Activated CD4-positive, alpha-beta T cell treated with anti-CD3 and anti-CD28 coated beads, Interleukin-2, amount 10 ng/mL, durations not matched to agents 24 days and 14 days (primary cell): ENCODE measurements at regions of chr2 and their contacts with region 1.

Region 1: GRCh38 chr2:105929516-105929915 is 184.8 kb downstream of the NCK2 start:
- DNase-seq: peak; percentile 79
- H3K4me3 Mint-ChIP-seq: peak overlapping the region; percentile 44
- H3K27ac Mint-ChIP-seq: peak overlapping the region; percentile 66
- H3K4me1 Mint-ChIP-seq: peaks cover 42% of the 10 kb centered on the region
- H3K27me3 Mint-ChIP-seq: no peaks in the 10 kb centered on the region

Region 2: GRCh38 chr2:105373895-105374401 is 555.6 kb before region 1 on chr2:
- intact Hi-C with region 1: no loop called
- DNase-seq: peak; percentile 80
- H3K4me3 Mint-ChIP-seq: peak overlapping the region; percentile 77
- H3K27ac Mint-ChIP-seq: peak overlapping the region; percentile 95
- H3K4me1 Mint-ChIP-seq: peaks cover 17% of the 10 kb centered on the region
- H3K27me3 Mint-ChIP-seq: no peaks in the 10 kb centered on the region

Region 3: GRCh38 chr2:105873721-105874120 is 55.8 kb before region 1 on chr2:
- intact Hi-C with region 1: loop called (anchors 2 kb)
- DNase-seq: peak; percentile 78
- H3K4me3 Mint-ChIP-seq: peak overlapping the region; percentile 59
- H3K27ac Mint-ChIP-seq: peak overlapping the region; percentile 84
- H3K4me1 Mint-ChIP-seq: peaks cover 74% of the 10 kb centered on the region
- H3K27me3 Mint-ChIP-seq: no peaks in the 10 kb centered on the region

Region 4: DNA sequence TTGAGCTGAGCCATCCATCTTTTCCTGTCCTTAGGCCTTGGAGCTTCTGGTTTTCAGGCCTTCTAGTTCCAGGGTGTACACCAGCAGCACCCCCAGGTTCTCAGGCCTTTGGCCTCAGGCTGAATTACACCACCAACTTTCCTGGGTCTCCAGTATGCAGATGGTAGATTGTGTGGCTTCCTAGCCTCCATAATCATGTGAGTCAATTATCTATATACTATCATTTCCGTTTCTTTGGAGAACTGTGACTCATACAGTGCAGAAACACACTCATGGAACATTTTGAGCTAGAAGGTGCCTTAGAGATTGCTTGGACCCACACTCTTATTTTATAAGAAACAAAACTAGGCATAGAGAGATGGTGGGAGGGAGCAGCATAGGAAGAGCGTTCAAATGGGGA is 17.4 kb before region 1 on chr2:
- intact Hi-C with region 1: loop called (anchors 2 kb)
- DNase-seq: no peak
- H3K4me3 Mint-ChIP-seq: no peak overlapping the region
- H3K27ac Mint-ChIP-seq: peak overlapping the region; percentile 66
- H3K4me1 Mint-ChIP-seq: peaks cover 12% of the 10 kb centered on the region
- H3K27me3 Mint-ChIP-seq: no peaks in the 10 kb centered on the region

Region 5: GRCh38 chr2:106085181-106085940 is 155.8 kb after region 1 on chr2:
- intact Hi-C with region 1: loop called (anchors 5 kb)
- DNase-seq: peak; percentile 86
- H3K4me3 Mint-ChIP-seq: peak overlapping the region; percentile 60
- H3K27ac Mint-ChIP-seq: peak overlapping the region; percentile 73
- H3K4me1 Mint-ChIP-seq: peaks cover 28% of the 10 kb centered on the region
- H3K27me3 Mint-ChIP-seq: no peaks in the 10 kb centered on the region